ENCODE measurements at regions of chr15 and their contacts with region 1.

Region 1: DNA sequence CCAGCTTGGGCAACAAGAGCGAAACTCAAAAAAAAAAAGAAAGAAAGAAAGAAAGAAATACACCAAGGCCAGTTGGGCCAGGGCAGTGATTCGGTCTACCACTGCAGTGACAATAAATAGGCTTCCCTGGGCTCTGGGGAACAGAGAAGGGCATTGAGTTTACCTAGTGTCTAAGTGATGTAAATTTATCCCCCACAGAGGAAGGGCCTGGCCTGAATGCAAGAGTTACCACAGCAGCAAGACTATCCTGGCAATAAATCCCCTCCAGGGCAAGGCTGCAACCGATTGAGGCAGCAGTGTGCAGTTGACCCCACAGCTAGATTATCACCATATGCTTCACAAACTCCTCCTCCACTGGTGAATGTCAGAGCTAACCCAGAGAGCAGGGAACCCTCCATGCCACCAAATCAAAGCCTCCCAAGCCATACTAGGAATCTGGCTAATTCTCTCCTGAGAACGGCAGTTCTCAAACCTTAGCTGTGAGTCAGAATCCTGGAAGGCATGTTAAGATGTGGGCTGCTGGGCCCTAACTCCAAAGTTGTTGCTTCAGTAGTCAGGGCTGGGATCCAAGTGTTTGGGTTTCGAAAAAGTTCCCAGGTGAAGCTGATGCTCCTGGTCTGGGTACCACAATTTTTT is 64.3 kb upstream of the GATM start:
- DNase-seq: no peak
- H3K4me3 Mint-ChIP-seq: no peak overlapping the region
- H3K27ac Mint-ChIP-seq: no peak overlapping the region
- H3K4me1 Mint-ChIP-seq: no peaks in the 10 kb centered on the region
- H3K27me3 Mint-ChIP-seq: peaks cover 31% of the 10 kb centered on the region

Region 2: DNA sequence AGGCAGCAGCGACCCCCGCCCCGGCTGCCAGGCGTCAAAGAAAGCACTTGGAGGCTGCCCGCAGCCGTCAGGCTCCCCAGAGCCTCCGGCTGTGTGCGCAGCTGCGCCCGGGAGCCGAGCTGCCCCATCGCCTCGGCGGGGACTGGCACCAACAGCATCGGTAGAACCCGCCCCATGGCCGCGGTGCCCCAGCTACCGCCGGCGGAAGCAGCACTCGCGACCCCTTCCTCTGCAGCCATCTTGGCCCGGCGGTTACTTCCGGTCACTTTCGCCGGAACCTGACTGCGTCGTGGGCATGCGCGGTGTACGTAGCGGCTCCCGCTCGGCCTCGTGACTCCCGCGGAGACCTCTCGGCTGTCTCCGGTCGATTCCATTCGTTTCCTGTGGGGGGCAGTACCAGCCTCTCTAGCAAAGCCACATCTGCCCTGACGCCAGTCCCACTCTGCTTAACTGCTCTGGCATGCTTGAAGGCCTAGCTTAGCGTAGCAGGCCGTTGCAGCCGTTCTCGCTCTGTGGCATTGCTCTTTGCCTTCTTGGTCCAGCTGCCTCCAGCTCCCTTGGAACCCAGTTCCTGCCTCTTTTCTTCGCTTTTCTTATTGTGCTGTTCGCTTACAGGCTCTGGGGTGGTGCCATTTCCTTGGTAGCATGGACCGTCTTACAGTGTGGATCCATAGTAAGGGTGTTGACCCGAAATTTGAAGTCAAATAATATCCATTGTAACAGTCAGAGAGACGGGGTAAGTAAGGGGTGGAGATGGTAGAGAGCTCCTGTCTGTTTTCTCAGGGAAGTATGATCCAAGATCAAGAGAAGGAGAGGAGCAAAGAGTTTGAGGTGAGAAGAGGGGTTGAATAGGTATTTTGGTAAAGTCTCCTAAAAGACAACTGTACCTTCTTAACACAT is 779.0 kb before region 1 on chr15 and contains the start of gene SPG11:
- CTCF ChIA-PET with region 1: no interaction called
- DNase-seq: peak; percentile 98
- H3K4me3 Mint-ChIP-seq: peak within 1 kb of the TSS; percentile 98
- H3K27ac Mint-ChIP-seq: peak within 1 kb of the TSS; percentile 100
- H3K4me1 Mint-ChIP-seq: peaks cover 58% of the 10 kb centered on the region
- H3K27me3 Mint-ChIP-seq: no peaks in the 10 kb centered on the region

Region 3: DNA sequence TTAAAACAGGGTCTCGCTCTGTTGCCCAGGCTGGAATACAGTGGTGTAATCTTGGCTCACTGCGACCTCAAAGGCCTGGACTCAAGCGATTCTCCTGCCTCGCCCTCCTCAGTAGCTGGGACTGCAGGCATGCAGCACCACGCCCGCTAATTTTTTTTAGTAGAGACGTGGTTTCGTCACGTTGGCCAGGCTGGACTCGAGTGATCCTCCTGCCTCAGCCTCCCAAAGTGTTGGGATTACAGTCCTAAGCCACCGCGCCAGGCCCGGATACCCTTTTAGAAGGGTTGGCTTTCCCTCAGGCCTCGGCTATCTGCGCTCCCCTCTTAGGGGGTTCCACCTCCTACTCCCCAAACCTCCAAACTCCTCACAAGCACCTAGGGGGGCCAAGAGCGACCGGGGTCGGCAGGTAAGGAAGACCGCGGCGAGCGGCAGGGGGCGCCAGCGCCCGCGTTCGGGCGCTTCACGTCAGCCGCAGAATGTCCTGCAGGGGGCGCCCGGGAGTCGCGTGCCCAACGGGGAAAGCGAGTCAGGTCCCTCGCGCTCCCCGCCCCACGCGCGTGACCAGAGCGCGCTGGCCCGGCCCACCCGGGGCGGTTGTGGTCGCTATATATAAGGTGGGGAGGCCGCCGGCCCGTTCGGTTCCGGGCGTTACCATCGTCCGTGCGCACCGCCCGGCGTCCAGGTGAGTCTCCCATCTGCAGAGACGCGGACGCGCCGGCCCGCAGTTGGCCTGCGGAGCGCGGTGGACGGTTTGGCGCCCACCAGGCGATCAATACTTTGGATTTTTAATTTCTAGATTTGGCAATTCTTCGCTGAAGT is 12.4 kb before region 1 on chr15:
- CTCF ChIA-PET with region 1: interaction called, 13 read pairs
- DNase-seq: peak; percentile 89
- H3K4me3 Mint-ChIP-seq: peak overlapping the region; percentile 41
- H3K27ac Mint-ChIP-seq: no peak overlapping the region
- H3K4me1 Mint-ChIP-seq: peaks cover 5% of the 10 kb centered on the region
- H3K27me3 Mint-ChIP-seq: peaks cover 39% of the 10 kb centered on the region

Region 4: GRCh38 chr15:45510758-45511280 is 68.2 kb after region 1 on chr15:
- CTCF ChIA-PET with region 1: no interaction called
- DNase-seq: no peak
- H3K4me3 Mint-ChIP-seq: no peak overlapping the region
- H3K27ac Mint-ChIP-seq: no peak overlapping the region
- H3K4me1 Mint-ChIP-seq: no peaks in the 10 kb centered on the region
- H3K27me3 Mint-ChIP-seq: no peaks in the 10 kb centered on the region